Mammary epithelial cell (primary cell): ENCODE measurements at regions of chr22 and their contacts with region 1.

Region 1: DNA sequence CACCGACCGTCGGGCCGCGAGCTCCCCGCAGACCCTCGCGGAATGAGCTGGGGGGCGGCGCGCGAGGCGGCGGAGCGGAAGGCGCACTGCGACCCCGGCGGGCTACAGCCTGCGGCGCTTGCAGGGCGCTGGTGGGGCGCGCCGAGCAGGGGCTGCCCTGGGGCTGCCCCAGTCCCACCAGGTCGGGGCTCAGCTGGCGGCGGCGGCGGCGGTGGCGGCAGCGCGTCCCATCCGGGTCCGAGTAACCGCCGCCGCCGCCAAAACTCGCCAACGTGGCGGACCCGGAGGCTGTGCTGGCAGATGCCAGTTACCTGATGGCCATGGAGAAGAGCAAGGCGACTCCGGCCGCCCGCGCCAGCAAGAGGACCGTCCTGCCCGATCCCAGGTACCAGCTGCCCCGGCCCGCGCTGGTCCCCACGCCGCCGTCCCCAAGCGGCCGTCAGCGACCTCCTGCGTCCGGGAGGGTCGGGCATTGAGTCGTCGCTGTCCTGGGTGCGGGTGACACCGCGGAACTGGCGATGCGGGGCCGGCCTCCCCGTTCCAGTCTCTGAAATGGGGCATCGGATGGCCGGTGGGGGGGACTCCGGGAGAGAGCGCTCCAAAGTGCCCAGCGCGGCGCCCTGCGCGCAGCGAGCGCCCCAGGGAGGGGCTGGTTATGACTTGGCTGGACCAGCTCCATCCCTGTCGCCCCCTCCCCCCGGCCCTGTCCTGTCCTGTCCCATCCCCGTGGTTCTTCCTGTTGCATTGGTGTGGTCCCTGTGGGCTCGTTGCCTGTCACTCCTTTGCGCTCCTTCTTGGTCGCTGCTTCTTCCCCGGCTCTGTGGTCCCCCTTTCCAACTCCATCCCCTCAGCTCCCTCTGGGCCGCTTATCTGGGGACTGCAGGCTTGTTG is 63.5 kb downstream of the CRYBB2 start:
- DNase-seq: no peak
- H3K4me3 ChIP-seq: no peak overlapping the region
- H3K27ac ChIP-seq: no peak overlapping the region
- H3K4me1 ChIP-seq: peaks cover 4% of the 10 kb centered on the region
- H3K27me3 ChIP-seq: peaks cover 28% of the 10 kb centered on the region
- CTCF ChIP-seq: no peak

Region 2: GRCh38 chr22:25582946-25583345 is 300.0 kb after region 1 on chr22:
- CTCF ChIA-PET with region 1: no interaction called
- dilution Hi-C with region 1: loop called (anchors 5 kb)
- in situ Hi-C with region 1: no loop called
- intact Hi-C with region 1: no loop called
- DNase-seq: peak; percentile 46
- H3K4me3 ChIP-seq: no peak overlapping the region
- H3K27ac ChIP-seq: no peak overlapping the region
- H3K4me1 ChIP-seq: peaks cover 19% of the 10 kb centered on the region
- H3K27me3 ChIP-seq: no peaks in the 10 kb centered on the region
- CTCF ChIP-seq: no peak